ENCODE measurements at regions of chr7 and their contacts with region 1.

Region 1: GRCh38 chr7:151351027-151351426 is 9.4 kb downstream of the NUB1 start:
- DNase-seq: peak in 7 of 14 experiments; percentile 12 to 62 (median 37)
- ATAC-seq: no peak
- H3K4me3 ChIP-seq: no peak overlapping the region
- H3K4me3 Mint-ChIP-seq: peak overlapping the region; percentile 70
- H3K27ac ChIP-seq: peak overlapping the region; percentile 60 to 93
- H3K27ac Mint-ChIP-seq: peak overlapping the region; percentile 94
- H3K4me1 ChIP-seq: peaks cover 51% of the 10 kb centered on the region
- H3K4me1 Mint-ChIP-seq: peaks cover 59% of the 10 kb centered on the region
- H3K27me3 ChIP-seq: no peaks in the 10 kb centered on the region
- H3K27me3 Mint-ChIP-seq: no peaks in the 10 kb centered on the region
- CTCF ChIP-seq: no peak

Region 2: DNA sequence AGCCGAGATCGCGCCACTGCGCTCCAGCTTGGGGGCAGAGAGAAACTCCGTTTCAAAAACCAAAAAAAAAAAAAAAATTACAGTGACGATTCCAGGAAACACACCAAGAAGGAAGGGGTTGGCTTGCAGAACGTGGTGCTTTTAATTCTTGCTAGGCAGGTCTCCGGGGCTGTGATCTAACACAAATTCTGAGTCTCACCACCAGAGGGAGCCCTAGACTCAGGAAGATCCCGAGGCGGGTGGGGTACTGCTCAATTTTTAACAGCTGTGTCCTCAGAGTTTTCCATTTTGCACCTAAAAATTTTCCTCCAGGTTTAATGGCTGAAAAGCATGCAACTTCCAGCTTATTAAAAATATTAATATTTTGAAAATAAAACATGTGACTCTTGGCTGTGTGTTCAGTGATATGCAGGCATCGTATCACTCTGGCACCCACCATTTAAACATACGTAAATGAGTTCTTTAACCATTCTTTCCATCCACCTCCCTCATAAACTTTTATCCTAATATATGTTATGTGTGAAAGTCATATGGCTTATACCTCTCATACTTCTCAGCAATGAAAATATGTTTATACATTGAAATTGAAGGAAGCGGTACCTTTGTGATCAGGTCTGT is 35.9 kb before region 1 on chr7:
- CTCF ChIA-PET with region 1: interaction called, 83 read pairs
- POLR2A ChIA-PET with region 1: interaction called, 16 read pairs
- intact Hi-C with region 1: loop called (anchors 1 kb)
- DNase-seq: peak; percentile 60 to 90 (median 74)
- ATAC-seq: peak; percentile 95
- H3K4me3 ChIP-seq: no peak overlapping the region
- H3K4me3 Mint-ChIP-seq: no peak overlapping the region
- H3K27ac ChIP-seq: no peak overlapping the region
- H3K27ac Mint-ChIP-seq: no peak overlapping the region
- H3K4me1 ChIP-seq: peaks cover 9% of the 10 kb centered on the region
- H3K4me1 Mint-ChIP-seq: peaks cover 9% of the 10 kb centered on the region
- H3K27me3 ChIP-seq: no peaks in the 10 kb centered on the region
- H3K27me3 Mint-ChIP-seq: no peaks in the 10 kb centered on the region
- CTCF ChIP-seq: peak; percentile 93